Stomach (tissue), 19 donors: ENCODE measurements at regions of chr1 and their contacts with region 1.

Region 1: DNA sequence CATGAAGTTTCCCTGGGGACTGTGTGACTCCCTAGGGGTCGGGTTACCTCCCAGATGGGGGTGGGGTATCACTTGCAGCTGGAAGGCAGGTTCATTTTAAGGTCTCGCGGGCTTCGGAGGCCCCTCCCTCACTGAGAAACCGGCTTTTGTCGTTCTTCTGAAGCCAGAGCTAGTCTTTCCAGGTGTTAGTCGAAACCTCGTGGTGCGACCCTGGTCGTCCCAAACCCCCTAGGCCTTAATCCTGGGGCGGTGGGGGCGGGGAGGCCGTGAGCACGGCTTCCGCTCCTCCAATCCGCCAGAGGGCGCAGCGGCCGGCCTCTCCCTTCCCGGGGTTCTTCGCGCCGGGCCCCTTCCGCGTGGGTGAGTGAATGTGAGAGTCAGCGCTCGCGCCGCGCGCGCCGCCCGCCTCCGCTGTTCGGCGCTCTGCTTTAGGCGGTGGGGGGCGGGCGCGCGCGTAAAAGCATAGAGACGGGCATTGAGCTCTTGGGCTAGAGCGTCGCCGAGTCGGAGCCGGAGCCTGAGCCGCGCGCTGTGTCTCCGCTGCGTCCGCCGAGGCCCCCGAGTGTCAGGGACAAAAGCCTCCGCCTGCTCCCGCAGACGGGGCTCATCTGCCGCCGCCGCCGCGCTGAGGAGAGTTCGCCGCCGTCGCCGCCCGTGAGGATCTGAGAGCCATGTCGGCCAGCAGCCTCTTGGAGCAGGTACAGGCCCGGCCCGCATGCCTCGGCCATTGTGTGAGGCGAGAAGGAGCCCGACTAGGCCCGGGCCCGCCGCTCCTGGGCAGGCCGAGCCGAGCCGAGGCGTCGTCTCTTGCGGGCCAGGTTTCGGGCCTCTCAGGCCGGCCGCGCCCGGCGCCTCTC is at the start of gene YTHDF2:
- DNase-seq: peak; percentile 98 to 99
- H3K4me3 ChIP-seq: peak within 1 kb of the TSS; percentile 94 to 96 (median 95)
- H3K27ac ChIP-seq: peak within 1 kb of the TSS; percentile 94 to 99 (median 96)
- H3K4me1 ChIP-seq: peaks cover 33 to 50% (median 49%) of the 10 kb centered on the region in 4 donors
- H3K27me3 ChIP-seq: no peaks in the 10 kb centered on the region
- CTCF ChIP-seq: peak in 5 of 7 experiments; percentile 83 to 94 (median 90)
- EP300 ChIP-seq: no peak
- POLR2A ChIP-seq: peak in 2 of 4 donors; percentile 68 to 72
- total RNA-seq, gene YTHDF2: 9.9 to 50.5 (median 41.7) TPM

Region 2: GRCh38 chr1:28671254-28671820 is 65.3 kb before region 1 on chr1:
- intact Hi-C with region 1: loop called (anchors 10 kb)
- DNase-seq: no peak
- H3K4me3 ChIP-seq: no peak overlapping the region
- H3K27ac ChIP-seq: no peak overlapping the region
- H3K4me1 ChIP-seq: peaks cover 16 to 24% (median 22%) of the 10 kb centered on the region in 4 donors
- H3K27me3 ChIP-seq: no peaks in the 10 kb centered on the region
- CTCF ChIP-seq: no peak
- EP300 ChIP-seq: no peak
- POLR2A ChIP-seq: no peak

Region 3: DNA sequence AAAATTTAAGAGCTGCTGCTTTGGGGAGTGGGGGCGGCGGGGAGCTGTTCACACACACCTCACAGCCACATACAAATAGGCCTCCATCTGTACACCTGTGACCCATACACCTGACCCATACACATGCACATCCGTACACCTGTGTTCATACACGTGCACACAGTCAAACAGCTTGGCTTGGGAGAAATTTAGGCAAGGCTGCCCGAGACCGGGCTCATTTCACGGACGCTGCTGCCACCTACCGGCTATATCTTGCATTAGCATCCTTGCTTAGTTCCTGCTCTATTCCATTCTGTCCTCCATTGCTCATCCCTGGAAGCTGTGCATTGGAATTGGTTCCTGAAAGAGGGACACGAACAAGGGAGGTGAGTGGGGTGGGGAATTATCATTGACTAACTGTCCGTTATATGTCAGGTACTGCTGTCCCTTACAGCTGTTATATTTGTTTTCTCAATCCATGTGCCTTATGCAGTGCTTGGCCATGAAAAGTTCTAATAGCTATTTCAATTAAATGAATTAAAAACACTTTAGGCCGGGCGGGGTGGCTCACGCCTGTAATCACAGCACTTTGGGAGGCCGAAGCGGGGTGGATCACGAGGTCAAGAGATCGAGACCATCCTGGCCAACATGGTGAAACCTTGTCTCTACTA is 140.6 kb after region 1 on chr1:
- intact Hi-C with region 1: no loop called
- DNase-seq: peak; percentile 87 to 94
- H3K4me3 ChIP-seq: peak overlapping the region in 2 of 4 donors; percentile 6 to 25
- H3K27ac ChIP-seq: no peak overlapping the region
- H3K4me1 ChIP-seq: peaks cover 0 to 21% (median 14%) of the 10 kb centered on the region in 4 donors
- H3K27me3 ChIP-seq: peaks cover 0 to 13% (median 0%) of the 10 kb centered on the region in 3 donors
- CTCF ChIP-seq: peak in 5 of 7 experiments; percentile 87 to 95 (median 91)
- EP300 ChIP-seq: no peak
- POLR2A ChIP-seq: no peak